Naive thymus-derived CD4-positive, alpha-beta T cell (primary cell): ENCODE measurements at regions of chr3 and their contacts with region 1.

Region 1: DNA sequence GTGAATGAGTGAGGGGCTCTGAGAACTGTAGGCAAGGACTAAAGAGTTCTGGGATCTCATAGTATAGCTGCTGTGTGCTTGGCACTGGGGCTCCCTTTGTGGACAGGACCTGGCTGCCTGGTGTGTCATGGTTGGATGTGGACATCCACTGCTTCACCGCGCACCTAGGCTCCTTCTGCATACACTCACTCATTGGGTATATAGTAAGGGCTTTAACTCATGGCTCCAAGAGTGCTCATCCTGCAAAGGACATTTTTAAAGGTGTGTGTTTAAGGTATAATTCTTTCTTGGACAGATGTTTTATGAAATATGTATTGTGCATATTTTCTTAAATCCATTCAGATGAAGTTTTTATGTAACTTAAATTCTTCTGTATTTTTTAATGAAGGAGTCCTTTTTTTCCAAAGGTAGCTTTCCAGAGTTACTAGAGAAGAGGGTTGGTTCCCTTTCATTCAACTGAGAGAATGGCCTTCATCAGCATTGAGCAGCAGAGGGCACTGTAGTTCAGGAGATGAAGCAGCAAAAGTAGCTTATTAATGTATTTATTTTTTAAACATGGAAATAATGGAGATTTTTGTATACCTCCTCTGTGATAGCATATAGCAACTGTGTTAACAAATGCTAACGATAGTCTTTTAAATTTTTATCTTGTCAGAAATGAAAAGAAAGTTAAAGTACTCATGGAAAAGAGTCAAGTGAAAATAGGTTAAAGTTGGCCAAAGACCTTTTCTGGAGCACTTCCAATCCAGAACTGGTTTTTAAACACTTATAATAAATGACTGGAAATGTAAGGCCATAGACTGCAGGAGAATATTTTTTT is 25.2 kb downstream of the OXNAD1 start:
- DNase-seq: peak in 6 of 9 donors; percentile 44 to 67 (median 62)
- ATAC-seq: peak; percentile 58
- H3K4me3 ChIP-seq: peak overlapping the region; percentile 67
- H3K4me3 Mint-ChIP-seq: peak overlapping the region; percentile 87 to 99 (median 96)
- H3K27ac ChIP-seq: peak overlapping the region; percentile 90
- H3K27ac Mint-ChIP-seq: peak overlapping the region; percentile 86 to 99 (median 97)
- H3K4me1 ChIP-seq: peaks cover 32 to 65% of the 10 kb centered on the region in 2 donors
- H3K4me1 Mint-ChIP-seq: peaks cover 38 to 77% (median 53%) of the 10 kb centered on the region in 7 donors
- H3K27me3 ChIP-seq: no peaks in the 10 kb centered on the region
- H3K27me3 Mint-ChIP-seq: no peaks in the 10 kb centered on the region

Region 2: DNA sequence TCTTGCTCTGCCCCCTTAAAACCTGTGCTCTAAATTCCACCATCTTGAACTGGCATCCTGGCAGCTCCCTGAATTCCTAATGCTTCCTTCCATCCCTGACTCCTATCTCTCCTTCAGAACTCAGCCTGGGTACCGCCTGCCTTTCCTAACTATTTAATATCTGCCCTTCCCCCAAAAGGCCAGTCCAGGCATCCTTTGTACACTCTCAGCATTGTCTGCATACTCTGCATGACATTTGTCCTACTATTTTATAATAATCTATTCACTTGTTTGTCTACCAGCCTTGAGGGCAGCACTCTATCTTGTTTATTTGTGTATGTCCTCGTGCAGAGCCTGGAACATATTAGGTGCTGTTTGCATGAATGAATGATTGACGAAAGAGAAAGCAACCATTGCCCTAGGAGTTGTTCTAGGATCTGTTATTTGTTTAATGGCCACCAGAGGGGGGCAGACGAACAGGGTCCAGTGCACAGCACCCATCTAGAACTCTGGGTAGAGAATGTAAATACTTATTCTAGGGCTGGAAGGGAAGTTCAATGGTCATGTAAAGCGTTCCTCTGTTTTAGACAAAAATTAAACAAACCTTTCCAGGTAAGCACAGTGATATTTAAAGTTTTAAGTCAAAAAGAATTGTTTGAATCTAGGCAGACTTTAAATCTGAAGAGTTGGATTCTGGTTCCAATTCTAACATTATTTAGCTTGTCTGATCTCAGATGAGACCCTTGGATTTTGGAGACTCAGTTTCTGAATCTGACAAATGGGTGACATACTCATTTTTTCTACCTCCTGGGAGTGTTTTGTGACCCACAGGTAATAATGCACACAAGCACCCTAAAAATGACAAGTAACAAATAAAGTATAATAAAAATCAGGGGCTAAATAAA is 241.5 kb before region 1 on chr3:
- CTCF ChIA-PET with region 1: no interaction called
- POLR2A ChIA-PET with region 1: no interaction called
- intact Hi-C with region 1: loop called in 1 of 2 experiments (anchors 1 kb)
- DNase-seq: peak in 7 of 9 donors; percentile 11 to 53 (median 43)
- ATAC-seq: peak; percentile 92
- H3K4me3 ChIP-seq: no peak overlapping the region
- H3K4me3 Mint-ChIP-seq: peak overlapping the region in 5 of 10 donors; percentile 4 to 72 (median 48)
- H3K27ac ChIP-seq: no peak overlapping the region
- H3K27ac Mint-ChIP-seq: no peak overlapping the region
- H3K4me1 ChIP-seq: no peaks in the 10 kb centered on the region
- H3K4me1 Mint-ChIP-seq: peaks cover 0 to 5% (median 4%) of the 10 kb centered on the region in 7 donors
- H3K27me3 ChIP-seq: no peaks in the 10 kb centered on the region
- H3K27me3 Mint-ChIP-seq: peaks cover 0 to 5% (median 0%) of the 10 kb centered on the region in 5 donors

Region 3: GRCh38 chr3:16309558-16309957 is 19.3 kb after region 1 on chr3:
- CTCF ChIA-PET with region 1: interaction called, 238 read pairs
- POLR2A ChIA-PET with region 1: interaction called, 318 read pairs
- intact Hi-C with region 1: loop called (anchors 1 kb)
- DNase-seq: peak in 6 of 9 donors; percentile 51 to 86 (median 59)
- ATAC-seq: peak; percentile 83
- H3K4me3 ChIP-seq: no peak overlapping the region
- H3K4me3 Mint-ChIP-seq: peak overlapping the region; percentile 25 to 90 (median 78)
- H3K27ac ChIP-seq: peak overlapping the region; percentile 48
- H3K27ac Mint-ChIP-seq: peak overlapping the region; percentile 85 to 98 (median 91)
- H3K4me1 ChIP-seq: peaks cover 92 to 94% of the 10 kb centered on the region in 2 donors
- H3K4me1 Mint-ChIP-seq: peaks cover 74 to 97% (median 92%) of the 10 kb centered on the region in 7 donors
- H3K27me3 ChIP-seq: no peaks in the 10 kb centered on the region
- H3K27me3 Mint-ChIP-seq: no peaks in the 10 kb centered on the region

Region 4: DNA sequence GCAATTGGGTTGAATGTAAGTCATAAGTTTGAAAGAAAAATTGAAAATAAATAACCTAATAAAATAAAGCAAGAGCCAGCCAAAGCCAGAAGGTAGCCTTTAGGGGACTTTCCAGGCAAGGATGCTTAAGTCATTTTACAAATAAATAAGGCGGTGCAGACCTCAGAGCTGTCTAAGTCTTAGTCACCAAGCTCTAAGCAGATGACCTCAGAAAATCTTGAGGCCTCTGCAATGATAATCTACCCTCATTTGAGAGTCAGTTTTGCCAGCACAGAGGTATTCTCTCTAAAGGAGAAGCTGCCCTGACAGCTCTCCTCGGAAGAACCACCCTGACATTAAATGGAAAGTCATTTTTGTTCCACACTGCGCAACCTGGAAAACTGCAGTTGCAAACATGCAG is 88.7 kb after region 1 on chr3:
- CTCF ChIA-PET with region 1: no interaction called
- POLR2A ChIA-PET with region 1: interaction called, 6 read pairs
- intact Hi-C with region 1: loop called (anchors 1 to 2 kb)
- DNase-seq: no peak
- ATAC-seq: peak; percentile 19
- H3K4me3 ChIP-seq: no peak overlapping the region
- H3K4me3 Mint-ChIP-seq: peak overlapping the region in 8 of 10 donors; percentile 26 to 85 (median 42)
- H3K27ac ChIP-seq: no peak overlapping the region
- H3K27ac Mint-ChIP-seq: peak overlapping the region in 8 of 9 donors; percentile 54 to 94 (median 90)
- H3K4me1 ChIP-seq: peaks cover 28 to 60% of the 10 kb centered on the region in 2 donors
- H3K4me1 Mint-ChIP-seq: peaks cover 52 to 98% (median 87%) of the 10 kb centered on the region in 7 donors
- H3K27me3 ChIP-seq: no peaks in the 10 kb centered on the region
- H3K27me3 Mint-ChIP-seq: no peaks in the 10 kb centered on the region

Region 5: GRCh38 chr3:16511681-16512434 is 221.6 kb after region 1 on chr3:
- CTCF ChIA-PET with region 1: interaction called, 6 read pairs
- POLR2A ChIA-PET with region 1: interaction called, 10 read pairs
- intact Hi-C with region 1: loop called (anchors 1 kb)
- DNase-seq: peak; percentile 43 to 90 (median 86)
- ATAC-seq: peak; percentile 86
- H3K4me3 ChIP-seq: peak overlapping the region; percentile 79
- H3K4me3 Mint-ChIP-seq: peak overlapping the region; percentile 82 to 98 (median 94)
- H3K27ac ChIP-seq: peak overlapping the region; percentile 88
- H3K27ac Mint-ChIP-seq: peak overlapping the region; percentile 87 to 99 (median 95)
- H3K4me1 ChIP-seq: peaks cover 56 to 71% of the 10 kb centered on the region in 2 donors
- H3K4me1 Mint-ChIP-seq: peaks cover 62 to 85% (median 75%) of the 10 kb centered on the region in 7 donors
- H3K27me3 ChIP-seq: no peaks in the 10 kb centered on the region
- H3K27me3 Mint-ChIP-seq: no peaks in the 10 kb centered on the region

Region 6: DNA sequence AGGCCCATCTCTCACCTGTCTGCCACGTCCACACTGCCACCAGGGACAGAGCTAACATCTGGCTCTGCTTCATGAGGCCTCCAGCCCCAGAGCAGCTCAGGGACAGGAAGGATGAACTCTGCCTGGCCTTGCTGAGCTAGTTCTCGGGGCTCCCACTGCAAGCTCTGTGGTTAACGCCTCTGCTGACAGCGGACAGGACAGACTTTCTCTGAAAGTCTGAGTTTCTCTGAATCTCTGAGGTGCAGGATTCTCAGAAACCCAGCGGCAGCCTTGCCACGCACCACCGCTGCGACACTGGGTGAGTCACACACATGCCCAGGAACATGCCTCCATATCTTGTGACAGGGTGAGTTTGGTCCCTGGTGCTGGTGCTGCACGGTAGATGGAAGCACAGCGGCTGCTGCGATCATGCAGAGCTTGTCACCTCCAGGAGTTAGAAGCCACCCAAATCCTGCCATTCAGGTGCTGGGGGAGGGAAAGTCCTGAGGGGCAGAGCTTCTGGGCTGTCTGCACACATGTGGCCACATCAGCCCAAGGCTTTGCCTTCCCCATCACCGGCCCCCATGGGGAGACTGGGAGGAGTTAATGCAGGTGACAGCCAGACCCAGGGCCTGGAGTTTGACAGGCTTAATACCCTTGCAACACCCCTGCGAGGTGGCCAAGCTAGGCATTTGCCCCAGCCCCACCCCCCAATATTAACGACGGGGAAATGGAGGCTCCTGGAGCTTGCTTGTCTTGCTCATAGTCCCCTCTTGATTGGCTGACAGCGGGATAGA is 861.6 kb after region 1 on chr3:
- CTCF ChIA-PET with region 1: no interaction called
- POLR2A ChIA-PET with region 1: no interaction called
- intact Hi-C with region 1: loop called in 1 of 2 experiments (anchors 5 kb)
- DNase-seq: peak; percentile 27 to 81 (median 46)
- ATAC-seq: peak; percentile 87
- H3K4me3 ChIP-seq: peak overlapping the region; percentile 38
- H3K4me3 Mint-ChIP-seq: peak overlapping the region; percentile 38 to 86 (median 65)
- H3K27ac ChIP-seq: peak overlapping the region; percentile 45
- H3K27ac Mint-ChIP-seq: peak overlapping the region; percentile 41 to 95 (median 88)
- H3K4me1 ChIP-seq: peaks cover 18 to 33% of the 10 kb centered on the region in 2 donors
- H3K4me1 Mint-ChIP-seq: peaks cover 15 to 65% (median 28%) of the 10 kb centered on the region in 7 donors
- H3K27me3 ChIP-seq: no peaks in the 10 kb centered on the region
- H3K27me3 Mint-ChIP-seq: peaks cover 0 to 4% (median 0%) of the 10 kb centered on the region in 5 donors